ENCODE measurements at regions of chr16 and their contacts with region 1.

Region 1: DNA sequence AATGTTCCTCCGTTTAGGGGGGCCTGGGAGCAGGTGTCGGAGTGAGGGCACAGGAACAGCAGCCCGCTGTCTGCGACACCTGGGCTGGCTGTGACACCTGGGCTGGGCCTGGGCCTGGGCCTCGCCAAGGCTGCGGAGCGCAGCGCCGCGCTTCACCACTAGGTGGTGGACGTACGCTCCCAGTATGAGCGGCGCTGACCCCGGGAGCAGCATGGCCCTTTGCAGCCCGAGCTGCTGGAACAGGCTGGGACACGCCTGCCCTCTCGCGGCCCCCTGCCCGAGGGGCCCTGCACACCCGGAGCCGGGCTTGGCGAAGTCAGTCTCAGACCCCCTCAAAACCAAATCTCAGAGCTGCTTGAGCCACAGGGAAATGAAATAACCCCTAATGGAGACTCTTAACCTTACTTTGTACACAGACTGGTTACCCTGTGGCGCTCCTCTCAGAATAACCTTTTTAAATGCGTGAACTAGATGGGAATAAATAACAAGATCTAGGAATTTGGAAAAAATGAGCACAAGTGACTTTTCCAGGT is 38.6 kb upstream of the FA2H start:
- DNase-seq: peak; percentile 80
- H3K4me3 Mint-ChIP-seq: no peak overlapping the region
- H3K27ac Mint-ChIP-seq: no peak overlapping the region
- H3K4me1 Mint-ChIP-seq: no peaks in the 10 kb centered on the region
- H3K27me3 Mint-ChIP-seq: peaks cover 17% of the 10 kb centered on the region

Region 2: DNA sequence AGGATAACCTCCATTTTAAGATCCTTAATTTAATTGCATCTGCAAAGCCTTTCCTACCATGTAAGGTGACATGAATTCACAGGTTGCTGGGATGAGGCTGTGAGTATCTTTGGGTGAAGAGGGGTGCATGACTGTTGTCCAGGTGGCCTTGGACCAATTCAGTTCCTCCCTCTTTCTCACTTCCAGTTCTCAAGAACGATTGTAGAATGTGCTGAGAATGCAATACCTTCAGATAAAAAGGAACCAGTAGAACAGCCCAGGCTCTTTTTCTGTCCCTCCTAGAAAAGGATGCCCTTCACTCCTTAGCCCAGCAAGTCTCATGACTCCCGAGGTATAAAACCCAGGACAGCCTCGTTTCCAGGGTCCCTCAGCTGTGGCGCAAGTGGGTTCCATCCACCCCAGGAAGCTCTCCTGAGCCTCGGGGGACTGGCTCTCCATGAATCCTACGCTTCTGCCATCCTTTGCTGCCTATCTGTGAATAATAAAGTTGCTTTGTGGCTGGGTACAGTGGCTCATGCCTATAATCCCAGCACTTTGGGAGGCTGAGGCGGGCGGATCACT is 23.0 kb after region 1 on chr16:
- CTCF ChIA-PET with region 1: no interaction called
- DNase-seq: no peak
- H3K4me3 Mint-ChIP-seq: no peak overlapping the region
- H3K27ac Mint-ChIP-seq: no peak overlapping the region
- H3K4me1 Mint-ChIP-seq: no peaks in the 10 kb centered on the region
- H3K27me3 Mint-ChIP-seq: peaks cover 16% of the 10 kb centered on the region

Region 3: DNA sequence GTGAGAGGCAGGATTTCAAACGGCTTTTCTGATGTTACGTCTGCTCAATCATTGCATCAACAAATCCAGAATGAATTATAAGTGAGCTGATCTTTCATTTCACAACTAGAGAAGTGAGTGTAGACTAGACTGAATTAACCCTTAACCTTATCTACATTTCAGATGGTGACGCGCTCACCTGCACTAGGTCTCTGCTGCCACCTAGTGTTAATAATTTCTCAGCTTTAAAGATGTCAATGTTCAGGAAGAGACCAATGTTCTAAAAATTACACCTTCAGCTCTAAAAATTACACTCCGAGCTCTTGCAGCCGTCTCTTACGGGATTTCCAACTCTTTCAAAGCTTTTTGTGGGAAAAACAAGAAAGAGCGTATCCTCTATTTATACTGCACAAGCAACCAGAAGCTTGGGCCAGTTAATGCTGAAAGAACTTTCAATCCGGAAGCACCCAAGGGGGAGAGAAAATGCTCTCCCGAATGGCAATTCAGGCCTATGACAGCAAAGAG is 49.6 kb after region 1 on chr16:
- CTCF ChIA-PET with region 1: interaction called, 37 read pairs
- DNase-seq: no peak
- H3K4me3 Mint-ChIP-seq: no peak overlapping the region
- H3K27ac Mint-ChIP-seq: no peak overlapping the region
- H3K4me1 Mint-ChIP-seq: peaks cover 18% of the 10 kb centered on the region
- H3K27me3 Mint-ChIP-seq: peaks cover 9% of the 10 kb centered on the region

Measured in activated naive CD4-positive, alpha-beta T cell treated with anti-CD3 and anti-CD28 coated beads, Interleukin-2, amount 10 ng/mL, durations not matched to agents 7 days and 5 days (primary cell).